GM10248 (cell line): ENCODE measurements at regions of chr1 and their contacts with region 1.

Region 1: DNA sequence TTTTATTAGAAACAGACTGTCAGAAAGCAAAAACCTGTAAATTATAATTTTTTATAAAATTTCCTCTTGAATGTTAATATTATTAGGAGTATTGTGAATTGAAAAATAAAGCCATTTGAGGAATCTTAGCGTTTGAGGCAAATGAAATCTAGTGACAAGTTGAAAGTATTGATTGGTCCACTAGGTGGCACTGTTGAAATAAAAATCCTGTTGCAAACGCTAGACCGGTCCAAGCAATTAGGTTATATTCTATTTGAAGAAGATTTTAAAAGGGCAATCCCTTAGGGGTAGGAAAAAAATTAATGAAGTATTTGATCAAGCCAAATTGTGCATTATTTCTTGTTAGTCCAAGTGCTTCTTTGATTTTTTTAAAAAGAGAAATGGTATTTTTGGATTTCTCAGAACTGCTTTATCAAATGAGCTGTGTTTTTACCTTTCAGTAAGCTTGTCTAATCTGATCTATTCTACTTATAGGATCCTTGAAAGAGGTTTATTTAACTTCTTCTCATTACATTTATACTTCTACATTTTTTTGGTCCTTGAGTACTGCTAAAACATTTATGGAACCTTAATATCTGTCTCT is 57.7 kb downstream of the ATG4C start:
- DNase-seq: peak; percentile 52
- CTCF ChIP-seq: peak; percentile 69

Region 2: DNA sequence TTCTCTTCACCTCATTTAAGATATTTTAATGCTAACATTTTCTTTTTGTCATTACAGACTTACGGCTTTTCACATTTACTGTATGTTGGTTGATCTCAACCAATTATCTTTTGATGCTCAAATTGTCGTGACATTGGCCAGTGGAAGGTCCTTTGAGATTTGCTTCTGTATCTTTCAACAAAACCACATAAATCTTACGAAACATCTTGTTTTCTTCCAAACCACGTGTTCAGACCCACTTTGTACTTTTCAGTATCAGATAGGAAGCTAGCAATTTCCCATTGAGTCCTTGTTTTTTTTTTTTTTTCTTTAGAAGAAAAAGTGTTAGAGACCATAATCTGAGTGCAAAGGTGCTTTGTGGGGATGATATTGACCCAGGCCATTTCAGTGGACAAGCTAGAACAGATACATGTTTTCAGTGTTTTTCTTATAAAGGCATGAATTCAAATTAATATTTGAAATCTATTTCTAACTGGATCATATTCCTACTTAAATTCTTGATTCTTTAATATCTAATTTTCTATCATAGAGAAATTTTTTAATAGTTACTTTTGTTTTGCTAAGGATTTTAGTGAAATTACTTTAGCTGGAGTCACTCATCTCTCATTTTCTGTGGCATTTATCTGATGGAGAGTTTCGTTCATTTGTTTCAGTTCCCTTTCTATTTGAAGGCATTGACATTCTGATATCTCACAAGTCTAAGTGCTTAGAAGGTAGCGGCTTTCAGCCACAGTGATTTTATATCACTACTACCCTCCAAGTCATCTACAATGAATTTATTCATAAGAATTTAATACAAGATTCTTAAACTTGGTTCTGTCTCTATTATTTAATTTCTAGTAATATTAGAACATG is 31.0 kb before region 1 on chr1:
- CTCF ChIA-PET with region 1: interaction called, 12 read pairs
- POLR2A ChIA-PET with region 1: no interaction called
- DNase-seq: peak; percentile 44
- CTCF ChIP-seq: no peak

Region 3: DNA sequence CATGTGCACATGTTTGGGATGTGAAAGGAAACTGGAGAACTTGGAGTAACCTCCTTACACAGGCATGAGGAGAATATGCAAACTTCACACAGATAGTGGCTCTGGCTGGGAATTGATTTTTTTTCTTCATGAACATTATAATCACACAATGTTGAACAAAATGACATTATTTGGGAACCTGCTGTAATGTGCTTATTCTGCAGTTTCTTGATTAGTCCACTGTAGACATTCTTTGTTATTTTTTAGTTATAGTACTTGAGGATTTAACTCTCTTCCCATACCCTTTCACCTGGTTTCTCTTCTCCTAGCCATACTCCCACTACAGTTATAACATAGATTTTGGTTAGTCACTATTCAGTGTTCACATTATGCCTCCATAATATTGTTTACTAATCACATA is 10.6 kb after region 1 on chr1:
- CTCF ChIA-PET with region 1: interaction called, 60 read pairs
- POLR2A ChIA-PET with region 1: no interaction called
- DNase-seq: no peak
- CTCF ChIP-seq: no peak

Region 4: GRCh38 chr1:62906428-62906886 is 64.8 kb after region 1 on chr1:
- CTCF ChIA-PET with region 1: interaction called, 10 read pairs
- POLR2A ChIA-PET with region 1: no interaction called
- DNase-seq: no peak
- CTCF ChIP-seq: peak; percentile 18